ENCODE measurements at regions of chr7 and their contacts with region 1.

Region 1: DNA sequence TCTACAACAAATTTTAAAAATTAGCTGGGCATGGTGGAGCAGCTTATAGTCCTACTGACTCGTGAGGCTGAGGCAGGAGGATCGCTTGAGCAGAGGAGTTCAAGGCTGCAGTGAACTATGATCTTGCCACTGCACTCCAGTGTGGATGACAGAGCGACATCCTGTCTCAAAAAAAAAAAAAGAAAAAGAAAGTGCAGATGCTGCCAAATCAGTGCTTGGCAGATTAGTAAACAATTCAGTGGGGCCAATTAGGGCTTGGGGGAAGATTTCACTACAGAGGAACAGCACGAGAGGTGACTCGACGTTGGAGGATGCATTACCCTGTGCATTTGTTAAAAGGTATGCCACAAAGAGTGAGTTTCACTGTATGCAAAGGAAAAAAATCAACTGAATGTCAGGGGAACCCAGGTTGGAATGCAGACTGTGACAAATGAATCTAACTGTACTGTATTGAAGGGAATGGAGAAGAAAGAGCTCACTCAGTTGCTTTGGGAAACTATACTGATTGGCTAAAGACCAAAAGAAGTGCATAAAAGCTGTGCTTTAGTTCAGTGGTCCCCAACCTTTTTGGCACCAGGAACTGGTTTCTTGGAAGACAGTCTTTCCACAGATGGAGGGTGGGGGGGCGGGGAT is 31.6 kb downstream of the GARIN1A start:
- DNase-seq: no peak
- H3K4me3 ChIP-seq: no peak overlapping the region
- H3K27ac ChIP-seq: no peak overlapping the region
- H3K4me1 ChIP-seq: no peaks in the 10 kb centered on the region
- H3K27me3 ChIP-seq: no peaks in the 10 kb centered on the region
- CTCF ChIP-seq: no peak

Region 2: DNA sequence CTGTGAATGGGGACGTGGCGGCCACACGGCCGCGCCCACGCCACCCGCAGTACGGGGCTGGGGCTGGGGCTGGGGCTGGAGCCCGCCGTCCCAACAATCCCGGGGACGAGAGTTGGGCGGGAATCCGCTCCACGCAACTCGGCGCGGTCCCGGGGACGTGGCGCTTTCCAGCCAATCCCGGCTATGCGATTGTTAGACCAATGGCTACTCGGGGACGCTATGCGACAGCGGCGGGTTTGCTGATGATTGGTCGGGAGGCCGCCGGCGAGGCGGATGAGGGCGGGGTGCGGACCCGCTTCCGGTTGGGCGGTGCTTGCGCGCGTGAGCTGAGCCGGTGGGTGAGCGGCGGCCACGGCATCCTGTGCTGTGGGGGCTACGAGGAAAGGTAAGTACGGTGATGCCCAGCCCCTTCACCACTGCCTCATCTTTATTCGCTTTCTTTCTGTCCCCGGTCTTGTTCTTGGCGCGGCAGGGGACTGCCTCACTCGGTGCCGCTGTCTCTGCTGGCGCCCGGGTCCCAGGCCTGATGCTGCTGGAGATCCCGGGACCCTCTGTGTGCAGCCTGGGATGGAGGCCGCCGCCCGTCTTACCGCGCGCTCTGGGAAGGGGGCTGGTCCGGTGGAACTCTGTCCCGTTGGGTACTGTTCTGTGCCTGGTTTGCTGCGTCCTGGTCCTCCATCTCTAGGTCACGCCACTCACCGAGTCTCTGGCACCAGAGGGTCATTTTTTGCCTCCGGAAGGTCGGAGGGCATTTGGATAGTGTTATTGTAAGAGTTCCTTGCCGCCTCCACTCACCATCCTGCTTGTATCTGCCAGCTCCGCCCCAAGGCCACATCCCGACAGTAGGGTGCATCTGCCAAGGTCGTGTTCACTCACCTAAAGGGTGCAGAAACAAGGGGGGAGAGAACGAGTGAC is 35.6 kb after region 1 on chr7 and contains the start of gene CALU:
- CTCF ChIA-PET with region 1: no interaction called
- dilution Hi-C with region 1: no loop called
- in situ Hi-C with region 1: no loop called
- intact Hi-C with region 1: loop called (anchors 2 kb)
- DNase-seq: peak; percentile 92
- H3K4me3 ChIP-seq: peak within 1 kb of the TSS; percentile 73 to 98 (median 96)
- H3K27ac ChIP-seq: peak within 1 kb of the TSS; percentile 86
- H3K4me1 ChIP-seq: peaks cover 46% of the 10 kb centered on the region
- H3K27me3 ChIP-seq: no peaks in the 10 kb centered on the region
- CTCF ChIP-seq: no peak
- total RNA-seq, gene CALU: 185 to 232 TPM

Region 3: DNA sequence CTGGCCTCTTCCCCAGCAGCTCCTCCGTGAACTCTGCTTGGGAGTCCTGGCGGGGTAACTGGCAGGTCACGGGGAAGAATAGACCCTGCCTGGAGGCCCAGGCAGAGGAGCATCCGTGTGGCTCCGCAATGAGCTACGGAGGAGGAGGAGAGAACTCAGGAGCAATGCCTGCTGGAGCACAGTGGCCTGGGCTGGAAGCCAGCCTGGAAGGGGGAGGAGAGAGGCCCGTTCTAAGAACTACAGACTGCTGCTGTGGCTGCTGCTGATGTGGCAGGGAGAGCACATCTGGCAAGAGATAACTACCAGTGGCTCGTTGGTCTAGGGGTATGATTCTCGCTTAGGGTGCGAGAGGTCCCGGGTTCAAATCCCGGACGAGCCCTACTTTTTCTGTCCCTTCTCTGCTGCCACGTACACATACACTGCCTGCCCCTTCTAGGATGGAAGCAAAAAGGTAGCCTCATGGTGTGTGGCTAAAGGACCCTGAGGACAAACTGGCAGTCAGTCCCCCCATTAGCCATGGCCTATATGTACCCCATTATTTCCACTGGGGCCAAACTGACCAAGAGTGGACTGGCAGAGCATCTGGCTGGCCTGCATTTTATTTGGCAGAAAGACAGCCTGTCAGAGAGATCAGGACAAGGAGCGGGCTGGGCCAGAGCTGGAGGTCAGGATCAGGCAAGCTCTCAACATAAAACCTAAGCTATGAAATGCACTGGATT is 79.6 kb after region 1 on chr7:
- CTCF ChIA-PET with region 1: interaction called, 10 read pairs
- dilution Hi-C with region 1: no loop called
- in situ Hi-C with region 1: no loop called
- intact Hi-C with region 1: no loop called
- DNase-seq: peak; percentile 48
- H3K4me3 ChIP-seq: no peak overlapping the region
- H3K27ac ChIP-seq: no peak overlapping the region
- H3K4me1 ChIP-seq: no peaks in the 10 kb centered on the region
- H3K27me3 ChIP-seq: no peaks in the 10 kb centered on the region
- CTCF ChIP-seq: no peak